Right lobe of liver (tissue), 6 donors: ENCODE measurements at regions of chr11 and their contacts with region 1.

Region 1: GRCh38 chr11:125082611-125083311 is 19.7 kb downstream of the SLC37A2 start:
- DNase-seq: no peak
- ATAC-seq: no peak
- H3K4me3 ChIP-seq: no peak overlapping the region
- H3K27ac ChIP-seq: no peak overlapping the region
- H3K4me1 ChIP-seq: no peaks in the 10 kb centered on the region
- H3K27me3 ChIP-seq: no peaks in the 10 kb centered on the region
- CTCF ChIP-seq: no peak
- POLR2A ChIP-seq: no peak

Region 2: GRCh38 chr11:124732230-124732629 is 350.5 kb before region 1 on chr11:
- intact Hi-C with region 1: no loop called
- DNase-seq: no peak
- ATAC-seq: peak; percentile 54 to 67 (median 60)
- H3K4me3 ChIP-seq: no peak overlapping the region
- H3K27ac ChIP-seq: no peak overlapping the region
- H3K4me1 ChIP-seq: no peaks in the 10 kb centered on the region
- H3K27me3 ChIP-seq: no peaks in the 10 kb centered on the region
- CTCF ChIP-seq: no peak
- POLR2A ChIP-seq: no peak

Region 3: DNA sequence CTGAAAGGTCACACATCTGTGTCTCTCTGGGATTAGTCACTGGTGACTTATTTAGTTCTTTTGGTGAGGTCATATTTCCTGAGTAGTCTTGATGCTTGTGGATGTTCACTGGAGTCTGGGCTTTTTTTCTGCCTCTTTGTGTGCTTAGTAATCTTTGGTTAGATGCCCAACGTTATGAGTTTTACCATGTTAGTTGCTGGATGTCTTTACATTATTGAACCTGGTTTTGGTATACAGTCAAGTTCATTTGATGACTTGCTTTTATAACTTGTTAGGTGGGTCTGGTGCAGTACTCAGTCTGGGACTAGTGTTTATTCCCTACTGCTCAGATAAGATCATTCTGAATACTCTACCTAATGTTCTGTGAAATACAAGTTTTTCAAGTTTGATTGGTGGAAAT is 45.8 kb before region 1 on chr11:
- intact Hi-C with region 1: no loop called
- DNase-seq: no peak
- ATAC-seq: no peak
- H3K4me3 ChIP-seq: no peak overlapping the region
- H3K27ac ChIP-seq: no peak overlapping the region
- H3K4me1 ChIP-seq: no peaks in the 10 kb centered on the region
- H3K27me3 ChIP-seq: no peaks in the 10 kb centered on the region
- CTCF ChIP-seq: no peak
- POLR2A ChIP-seq: no peak

Region 4: DNA sequence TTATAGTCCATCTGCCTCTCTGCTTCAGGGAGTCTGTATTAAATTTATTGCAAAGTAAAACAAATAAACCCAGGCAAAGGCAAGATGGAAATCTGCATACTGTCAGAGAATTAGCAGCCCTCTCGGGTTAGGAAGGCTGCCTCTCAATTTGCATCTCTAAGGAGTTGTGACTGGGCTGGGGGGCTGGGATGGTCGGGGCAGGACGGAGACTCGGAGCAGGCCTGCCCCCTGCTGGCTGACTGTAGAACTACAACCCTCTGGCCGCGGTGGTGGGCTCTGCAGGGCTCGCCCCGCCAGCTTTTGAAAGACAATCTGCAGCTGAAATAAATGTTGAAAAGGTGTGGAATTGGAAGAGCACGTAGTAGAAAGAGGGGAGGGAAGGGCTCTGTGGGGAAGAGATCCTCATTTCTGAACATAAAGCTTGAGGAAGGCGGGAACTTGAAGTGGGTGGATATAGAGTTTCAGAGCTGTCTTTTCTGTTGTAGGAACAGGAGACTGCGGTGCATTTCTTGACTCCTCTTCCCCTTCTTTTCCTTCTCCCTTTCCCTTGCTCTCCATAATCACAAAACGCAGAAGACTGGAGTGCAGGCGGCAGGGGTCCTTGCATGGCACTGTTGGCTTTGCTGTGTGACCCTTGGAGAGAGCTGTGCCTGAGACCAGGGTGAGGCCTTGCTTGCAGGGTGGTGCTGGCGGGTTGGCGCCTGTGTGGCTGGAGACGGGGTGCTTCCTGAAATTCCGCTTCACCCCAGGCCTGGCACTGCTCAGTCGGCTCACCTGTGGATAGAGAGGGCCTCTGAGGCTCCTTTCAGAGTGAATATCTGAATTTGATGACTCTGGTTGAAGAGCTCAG is 59.1 kb after region 1 on chr11:
- intact Hi-C with region 1: loop called in 1 of 2 experiments (anchors 10 kb)
- DNase-seq: peak in 2 of 3 donors; percentile 50 to 61
- ATAC-seq: peak; percentile 84 to 92 (median 88)
- H3K4me3 ChIP-seq: no peak overlapping the region
- H3K27ac ChIP-seq: no peak overlapping the region
- H3K4me1 ChIP-seq: no peaks in the 10 kb centered on the region
- H3K27me3 ChIP-seq: no peaks in the 10 kb centered on the region
- CTCF ChIP-seq: peak; percentile 89 to 96 (median 90)
- POLR2A ChIP-seq: no peak

Region 5: GRCh38 chr11:125404776-125405435 is 322.1 kb after region 1 on chr11:
- intact Hi-C with region 1: loop called in 1 of 2 experiments (anchors 10 kb)
- DNase-seq: peak; percentile 68 to 78 (median 72)
- ATAC-seq: peak; percentile 90 to 98 (median 94)
- H3K4me3 ChIP-seq: no peak overlapping the region
- H3K27ac ChIP-seq: no peak overlapping the region
- H3K4me1 ChIP-seq: no peaks in the 10 kb centered on the region
- H3K27me3 ChIP-seq: peaks cover 0 to 4% of the 10 kb centered on the region in 2 donors
- CTCF ChIP-seq: peak; percentile 77 to 95 (median 92)
- POLR2A ChIP-seq: no peak